ENCODE measurements at regions of chr1 and their contacts with region 1.

Region 1: GRCh38 chr1:23524716-23525401 is 6.2 kb downstream of the E2F2 start:
- DNase-seq: peak; percentile 70
- H3K4me3 Mint-ChIP-seq: peak overlapping the region; percentile 99
- H3K27ac Mint-ChIP-seq: peak overlapping the region; percentile 97
- H3K4me1 Mint-ChIP-seq: peaks cover 72% of the 10 kb centered on the region
- H3K27me3 Mint-ChIP-seq: no peaks in the 10 kb centered on the region

Region 2: DNA sequence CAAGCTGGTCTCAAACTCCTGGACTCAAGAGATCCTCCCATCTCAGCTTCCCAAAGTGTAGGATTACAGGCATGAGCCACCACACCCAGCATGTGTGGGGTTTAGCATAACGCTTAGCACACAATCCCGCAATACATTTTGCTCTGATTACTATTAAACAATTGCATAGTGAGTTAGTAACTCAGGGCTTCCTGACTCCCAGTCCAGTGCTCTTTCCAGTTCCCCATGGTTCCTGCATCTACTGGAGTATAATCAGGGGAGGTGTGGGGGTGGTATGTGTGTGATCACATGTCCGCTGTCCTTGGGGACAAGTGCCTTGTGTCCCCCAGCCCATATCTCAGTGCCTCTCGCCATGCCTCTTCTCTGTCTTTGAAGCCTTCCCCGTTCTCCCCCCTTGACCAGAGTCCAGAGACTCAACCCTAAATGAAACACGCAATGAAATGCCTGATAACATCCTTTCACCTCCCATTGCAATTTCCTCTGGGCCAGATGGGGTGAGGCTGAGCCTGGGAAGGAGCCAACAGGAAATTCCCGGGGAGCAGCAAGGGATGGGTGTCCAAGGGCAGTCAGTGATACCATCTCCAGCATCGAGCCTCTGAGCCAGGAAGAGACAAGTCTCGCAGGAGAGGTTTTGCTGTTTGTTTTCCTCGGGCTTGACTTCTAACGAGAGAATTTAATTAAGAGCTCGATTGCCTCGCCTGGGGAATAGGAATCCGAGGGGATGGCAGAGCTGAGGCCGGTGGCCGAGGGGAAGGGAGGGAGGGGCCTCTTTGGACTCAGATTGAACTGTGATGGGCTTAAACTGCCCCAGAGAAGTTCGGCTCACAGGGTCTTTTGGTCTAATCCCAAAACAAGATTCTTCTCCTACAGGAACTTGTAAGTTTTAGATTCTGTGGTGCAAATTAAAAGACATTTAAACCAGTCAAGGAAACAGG is 299.9 kb before region 1 on chr1:
- CTCF ChIA-PET with region 1: no interaction called
- POLR2A ChIA-PET with region 1: no interaction called
- DNase-seq: no peak
- H3K4me3 Mint-ChIP-seq: no peak overlapping the region
- H3K27ac Mint-ChIP-seq: no peak overlapping the region
- H3K4me1 Mint-ChIP-seq: no peaks in the 10 kb centered on the region
- H3K27me3 Mint-ChIP-seq: peaks cover 27% of the 10 kb centered on the region

Region 3: DNA sequence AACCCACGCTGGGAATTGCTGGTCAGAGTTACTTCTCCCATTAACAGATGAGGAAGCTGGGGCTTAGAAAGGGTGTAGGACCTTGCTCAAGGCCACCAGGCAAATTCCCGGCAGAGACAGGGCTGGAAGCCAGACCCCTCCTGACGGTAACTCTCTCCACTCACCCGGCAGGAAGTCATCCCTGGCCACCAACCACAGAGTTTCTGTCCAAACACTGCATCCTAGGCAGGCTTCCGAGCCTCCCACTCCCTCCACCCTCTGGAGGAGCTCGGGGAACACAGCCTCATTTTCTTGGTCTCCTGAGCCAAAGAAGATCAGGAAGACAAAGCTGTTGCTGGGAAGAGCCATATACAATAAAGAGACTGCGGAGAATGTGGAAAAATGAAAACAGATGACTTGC is 130.2 kb before region 1 on chr1:
- CTCF ChIA-PET with region 1: no interaction called
- POLR2A ChIA-PET with region 1: no interaction called
- DNase-seq: no peak
- H3K4me3 Mint-ChIP-seq: no peak overlapping the region
- H3K27ac Mint-ChIP-seq: no peak overlapping the region
- H3K4me1 Mint-ChIP-seq: peaks cover 14% of the 10 kb centered on the region
- H3K27me3 Mint-ChIP-seq: no peaks in the 10 kb centered on the region

Region 4: DNA sequence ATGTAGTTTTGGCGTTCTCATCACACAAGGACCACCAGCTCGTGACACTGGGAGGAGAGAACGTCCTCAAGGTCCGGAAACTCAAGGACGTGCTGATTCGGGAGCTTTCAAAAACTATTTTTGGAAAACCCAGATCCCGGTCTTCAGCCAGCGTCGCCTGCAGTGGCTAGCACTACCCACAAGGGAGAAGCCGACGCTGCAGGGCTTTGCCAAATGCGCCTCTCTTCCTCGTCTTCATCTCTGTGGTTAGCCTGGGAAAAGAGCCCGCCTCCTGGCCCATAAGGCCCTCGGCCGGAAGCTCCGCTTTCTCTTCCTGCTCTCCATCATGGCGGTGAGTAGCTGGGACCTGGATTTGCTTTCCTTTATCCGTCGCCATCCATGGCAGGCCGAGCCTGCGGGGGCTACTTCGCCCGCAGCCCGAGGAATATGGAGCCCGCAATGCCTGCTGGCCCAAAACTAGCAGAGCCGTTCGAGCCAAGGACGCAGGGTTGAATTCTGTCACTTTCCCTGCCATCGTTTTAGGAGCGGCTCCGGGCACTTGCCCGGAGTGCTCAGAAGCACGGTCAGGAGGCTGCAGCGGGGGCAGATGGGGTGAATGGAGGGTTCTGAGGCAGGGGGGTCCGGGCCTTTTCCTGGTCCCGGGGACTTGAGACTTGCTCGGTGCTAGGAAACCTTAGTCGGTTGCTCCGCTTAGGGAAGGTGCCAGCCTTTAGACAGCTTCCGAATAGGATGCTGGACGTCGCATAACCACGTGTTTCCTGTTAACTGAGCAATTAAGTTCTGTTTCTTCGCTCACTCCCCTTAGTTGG is 166.8 kb after region 1 on chr1 and contains the start of gene RPL11:
- CTCF ChIA-PET with region 1: interaction called, 6 read pairs
- POLR2A ChIA-PET with region 1: interaction called, 17 read pairs
- DNase-seq: peak; percentile 89
- H3K4me3 Mint-ChIP-seq: peak within 1 kb of the TSS; percentile 94
- H3K27ac Mint-ChIP-seq: peak within 1 kb of the TSS; percentile 86
- H3K4me1 Mint-ChIP-seq: peaks cover 49% of the 10 kb centered on the region
- H3K27me3 Mint-ChIP-seq: no peaks in the 10 kb centered on the region
- total RNA-seq, gene RPL11: 1,074 to 1,084 TPM

Measured in activated CD4-positive, alpha-beta memory T cell treated with anti-CD3 and anti-CD28 coated beads, Interleukin-2, amount 10 ng/mL, durations not matched to agents 7 days and 5 days (primary cell).